K562 (cell line): ENCODE measurements at regions of chr12 and their contacts with region 1.

Region 1: DNA sequence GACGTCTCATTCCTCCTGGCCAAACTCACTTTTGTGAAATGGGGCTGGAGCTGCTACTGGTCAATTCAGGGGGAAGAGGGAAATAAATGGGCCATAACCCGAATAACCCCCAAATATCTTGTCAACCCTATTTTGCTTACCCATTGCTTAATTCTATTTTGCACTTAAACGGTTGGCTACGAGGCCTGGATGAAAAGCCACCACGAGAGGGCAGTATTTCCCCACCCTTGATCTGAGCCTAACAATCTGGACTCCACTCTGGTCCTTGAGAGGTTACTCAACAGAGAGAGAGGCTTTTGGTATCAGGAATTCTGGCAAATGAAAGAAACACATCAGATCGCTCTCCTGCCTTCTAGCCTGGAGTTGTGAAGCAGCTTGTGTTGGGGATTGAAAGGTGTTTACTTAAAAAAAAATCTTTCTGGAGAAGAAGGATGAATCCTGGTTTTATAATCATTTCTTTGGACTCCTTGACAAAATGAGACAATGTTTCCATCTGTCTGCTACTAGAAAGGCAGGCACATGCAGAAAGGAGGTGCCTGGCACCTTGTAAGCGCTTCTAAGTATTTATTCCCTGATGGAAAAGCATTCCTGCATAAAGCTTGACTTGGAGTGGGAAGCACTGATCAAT is 22.4 kb upstream of the FBXO21 start:
- DNase-seq: peak; percentile 74 to 79 (median 76)
- ATAC-seq: peak; percentile 94
- H3K4me3 ChIP-seq: no peak overlapping the region
- H3K27ac ChIP-seq: no peak overlapping the region
- H3K4me1 ChIP-seq: no peaks in the 10 kb centered on the region; a peak in 1 of 5 replicates
- H3K27me3 ChIP-seq: peaks cover 20 to 70% of the 10 kb centered on the region in 2 experiments; a peak in 4 of 5 replicates
- CTCF ChIP-seq: peak; percentile 85 to 95 (median 85)
- EP300 ChIP-seq: no peak
- POLR2A ChIP-seq: no peak
- RAD21 ChIP-seq: peak; percentile 56 to 80

Region 2: GRCh38 chr12:117155278-117156060 is 57.2 kb before region 1 on chr12:
- CTCF ChIA-PET with region 1: no interaction called
- POLR2A ChIA-PET with region 1: no interaction called
- in situ Hi-C with region 1: no loop called
- intact Hi-C with region 1: no loop called
- DNase-seq: peak; percentile 89 to 96 (median 92)
- ATAC-seq: peak; percentile 99
- H3K4me3 ChIP-seq: no peak overlapping the region
- H3K27ac ChIP-seq: no peak overlapping the region
- H3K4me1 ChIP-seq: peaks cover 5 to 12% of the 10 kb centered on the region in 2 experiments; a peak in 3 of 5 replicates
- H3K27me3 ChIP-seq: no peaks in the 10 kb centered on the region
- CTCF ChIP-seq: peak; percentile 95 to 99 (median 98)
- EP300 ChIP-seq: no peak
- POLR2A ChIP-seq: no peak
- RAD21 ChIP-seq: peak; percentile 9 to 60; a peak in 2 of 4 replicates

Region 3: GRCh38 chr12:117240081-117240755 is 27.5 kb after region 1 on chr12:
- CTCF ChIA-PET with region 1: no interaction called
- POLR2A ChIA-PET with region 1: no interaction called
- in situ Hi-C with region 1: no loop called
- intact Hi-C with region 1: no loop called
- DNase-seq: no peak
- ATAC-seq: no peak
- H3K4me3 ChIP-seq: no peak overlapping the region
- H3K27ac ChIP-seq: no peak overlapping the region
- H3K4me1 ChIP-seq: 0 out of 5 replicates have a peak, but pooled peaks cover 0 to 3% of the 10 kb centered on the region in 2 experiments
- H3K27me3 ChIP-seq: peaks cover 10 to 21% of the 10 kb centered on the region in 2 experiments; a peak in 3 of 5 replicates
- CTCF ChIP-seq: no peak
- EP300 ChIP-seq: no peak
- POLR2A ChIP-seq: no peak
- RAD21 ChIP-seq: no peak

Region 4: DNA sequence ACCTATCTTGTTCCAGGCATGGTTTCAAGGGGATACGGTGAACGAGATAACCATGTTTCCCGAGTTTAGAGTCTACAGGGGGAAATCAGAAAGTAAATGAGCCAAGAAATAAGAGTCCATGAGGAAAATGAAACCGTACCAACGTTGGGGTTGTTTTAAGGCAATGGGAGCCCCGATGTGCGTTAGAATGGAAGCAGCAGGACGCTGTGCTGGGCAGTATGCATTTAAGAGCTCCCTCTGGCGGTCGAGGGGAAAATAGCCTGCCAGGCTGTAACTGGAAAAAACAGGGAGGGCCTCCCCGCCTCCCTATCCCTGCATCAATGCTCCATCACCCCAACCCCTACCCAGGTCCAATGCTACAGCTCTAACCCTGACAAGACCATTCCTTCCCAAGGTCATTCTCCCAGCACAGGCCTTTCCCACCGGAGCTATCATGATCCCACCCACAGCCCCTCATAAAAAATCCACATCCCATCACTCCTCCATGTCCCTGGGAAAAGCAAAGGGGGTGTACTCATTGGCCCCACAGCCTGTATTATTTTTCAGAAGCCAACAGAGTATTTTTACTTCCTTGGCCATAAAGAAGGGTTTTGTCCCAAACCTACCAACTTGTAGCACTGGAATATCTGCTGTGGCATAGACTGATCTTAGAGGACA is 375.1 kb after region 1 on chr12:
- CTCF ChIA-PET with region 1: no interaction called
- POLR2A ChIA-PET with region 1: no interaction called
- in situ Hi-C with region 1: no loop called
- intact Hi-C with region 1: loop called (anchors 1 kb)
- DNase-seq: peak; percentile 60 to 80 (median 70)
- ATAC-seq: peak; percentile 92
- H3K4me3 ChIP-seq: no peak overlapping the region
- H3K27ac ChIP-seq: no peak overlapping the region
- H3K4me1 ChIP-seq: no peaks in the 10 kb centered on the region
- H3K27me3 ChIP-seq: no peaks in the 10 kb centered on the region; a peak in 1 of 5 replicates
- CTCF ChIP-seq: peak; percentile 82 to 87 (median 82)
- EP300 ChIP-seq: no peak
- POLR2A ChIP-seq: no peak
- RAD21 ChIP-seq: peak; percentile 24 to 74

Region 5: DNA sequence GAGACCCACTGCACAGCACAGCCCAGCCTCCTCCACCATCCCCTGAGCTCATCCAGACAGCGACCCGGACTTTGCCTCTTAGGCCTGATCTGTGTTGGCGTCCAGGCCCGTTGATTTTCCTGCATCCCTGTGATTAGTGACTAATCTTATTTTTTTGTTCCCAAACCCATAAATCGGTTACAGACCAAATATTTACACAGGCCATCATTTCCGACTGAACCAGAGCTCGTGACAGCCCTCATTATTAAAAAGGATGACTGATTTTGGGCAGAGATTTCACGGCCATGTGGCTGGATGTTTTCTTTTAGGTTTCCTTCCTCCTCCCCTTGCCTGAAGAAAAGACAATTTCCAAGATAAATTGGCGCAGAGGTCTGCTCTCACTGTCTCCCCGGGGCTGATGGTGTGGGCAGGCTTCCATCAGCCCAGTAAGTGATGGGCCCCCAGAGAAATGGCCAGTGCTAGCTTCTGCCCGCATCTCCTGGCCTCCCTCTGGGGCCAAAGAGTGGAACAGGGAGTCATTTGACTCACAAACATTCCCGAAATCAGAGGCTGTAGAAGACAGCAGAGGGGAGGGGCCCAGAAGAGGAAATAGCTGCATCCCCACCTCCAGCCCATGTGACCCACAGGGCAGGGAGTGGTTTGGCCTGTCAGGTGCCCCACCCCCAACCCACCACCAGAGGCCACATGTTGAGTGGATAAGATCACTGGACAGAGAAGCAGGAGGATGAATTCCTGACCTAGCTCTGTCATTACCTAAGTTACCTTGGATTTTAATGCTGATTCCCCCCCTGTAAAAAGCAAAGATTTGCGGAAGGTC is 472.6 kb after region 1 on chr12:
- CTCF ChIA-PET with region 1: no interaction called
- POLR2A ChIA-PET with region 1: no interaction called
- in situ Hi-C with region 1: no loop called
- intact Hi-C with region 1: loop called (anchors 10 kb)
- DNase-seq: peak; percentile 16 to 39 (median 30)
- ATAC-seq: peak; percentile 90
- H3K4me3 ChIP-seq: no peak overlapping the region
- H3K27ac ChIP-seq: no peak overlapping the region
- H3K4me1 ChIP-seq: no peaks in the 10 kb centered on the region; a peak in 1 of 5 replicates
- H3K27me3 ChIP-seq: peaks cover 0 to 9% of the 10 kb centered on the region in 2 experiments; a peak in 1 of 5 replicates
- CTCF ChIP-seq: no peak
- EP300 ChIP-seq: no peak
- POLR2A ChIP-seq: no peak
- RAD21 ChIP-seq: no peak

Region 6: GRCh38 chr12:117836999-117837736 is 624.5 kb after region 1 on chr12:
- CTCF ChIA-PET with region 1: interaction called, 3 read pairs
- POLR2A ChIA-PET with region 1: no interaction called
- in situ Hi-C with region 1: loop called (anchors 10 kb)
- intact Hi-C with region 1: loop called (anchors 5 kb)
- DNase-seq: peak; percentile 65 to 78 (median 77)
- ATAC-seq: peak; percentile 91
- H3K4me3 ChIP-seq: no peak overlapping the region
- H3K27ac ChIP-seq: no peak overlapping the region
- H3K4me1 ChIP-seq: no peaks in the 10 kb centered on the region
- H3K27me3 ChIP-seq: peaks cover 0 to 21% of the 10 kb centered on the region in 2 experiments; a peak in 2 of 5 replicates
- CTCF ChIP-seq: peak; percentile 89 to 98 (median 95)
- EP300 ChIP-seq: no peak
- POLR2A ChIP-seq: no peak
- RAD21 ChIP-seq: peak; percentile 76 to 93

Region 7: DNA sequence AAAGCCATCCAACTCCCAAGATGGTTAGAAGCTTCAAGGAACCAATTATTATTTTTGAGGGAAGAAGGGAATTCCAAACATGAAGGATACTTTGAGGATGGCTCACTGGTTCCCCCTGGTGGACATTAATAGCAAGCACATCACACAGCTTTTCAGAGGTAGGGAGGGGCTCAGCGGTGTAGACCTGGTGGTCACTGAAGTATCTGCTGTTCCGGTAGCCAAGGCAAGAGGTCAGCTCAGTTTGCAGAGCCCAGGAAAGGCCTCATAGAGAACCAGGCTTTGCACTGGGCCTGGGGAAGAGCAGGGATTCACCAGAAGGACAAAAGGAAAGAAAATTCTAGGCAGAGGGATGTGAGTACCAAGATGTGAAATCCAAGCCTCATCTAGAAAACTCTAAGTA is 637.4 kb after region 1 on chr12:
- CTCF ChIA-PET with region 1: interaction called, 4 read pairs
- POLR2A ChIA-PET with region 1: no interaction called
- in situ Hi-C with region 1: no loop called
- intact Hi-C with region 1: loop called (anchors 5 kb)
- DNase-seq: peak; percentile 62 to 83 (median 72)
- ATAC-seq: peak; percentile 92
- H3K4me3 ChIP-seq: no peak overlapping the region
- H3K27ac ChIP-seq: no peak overlapping the region
- H3K4me1 ChIP-seq: no peaks in the 10 kb centered on the region; a peak in 1 of 5 replicates
- H3K27me3 ChIP-seq: peaks cover 0 to 8% of the 10 kb centered on the region in 2 experiments; a peak in 1 of 5 replicates
- CTCF ChIP-seq: peak; percentile 83 to 86 (median 86)
- EP300 ChIP-seq: no peak
- POLR2A ChIP-seq: no peak
- RAD21 ChIP-seq: peak; percentile 12 to 62; a peak in 2 of 4 replicates